Activated CD8-positive, alpha-beta T cell treated with anti-CD3 and anti-CD28 coated beads, Interleukin-2, amount 10 ng/mL, durations not matched to agents 7 days and 5 days (primary cell): ENCODE measurements at regions of chr5 and their contacts with region 1.

Region 1: DNA sequence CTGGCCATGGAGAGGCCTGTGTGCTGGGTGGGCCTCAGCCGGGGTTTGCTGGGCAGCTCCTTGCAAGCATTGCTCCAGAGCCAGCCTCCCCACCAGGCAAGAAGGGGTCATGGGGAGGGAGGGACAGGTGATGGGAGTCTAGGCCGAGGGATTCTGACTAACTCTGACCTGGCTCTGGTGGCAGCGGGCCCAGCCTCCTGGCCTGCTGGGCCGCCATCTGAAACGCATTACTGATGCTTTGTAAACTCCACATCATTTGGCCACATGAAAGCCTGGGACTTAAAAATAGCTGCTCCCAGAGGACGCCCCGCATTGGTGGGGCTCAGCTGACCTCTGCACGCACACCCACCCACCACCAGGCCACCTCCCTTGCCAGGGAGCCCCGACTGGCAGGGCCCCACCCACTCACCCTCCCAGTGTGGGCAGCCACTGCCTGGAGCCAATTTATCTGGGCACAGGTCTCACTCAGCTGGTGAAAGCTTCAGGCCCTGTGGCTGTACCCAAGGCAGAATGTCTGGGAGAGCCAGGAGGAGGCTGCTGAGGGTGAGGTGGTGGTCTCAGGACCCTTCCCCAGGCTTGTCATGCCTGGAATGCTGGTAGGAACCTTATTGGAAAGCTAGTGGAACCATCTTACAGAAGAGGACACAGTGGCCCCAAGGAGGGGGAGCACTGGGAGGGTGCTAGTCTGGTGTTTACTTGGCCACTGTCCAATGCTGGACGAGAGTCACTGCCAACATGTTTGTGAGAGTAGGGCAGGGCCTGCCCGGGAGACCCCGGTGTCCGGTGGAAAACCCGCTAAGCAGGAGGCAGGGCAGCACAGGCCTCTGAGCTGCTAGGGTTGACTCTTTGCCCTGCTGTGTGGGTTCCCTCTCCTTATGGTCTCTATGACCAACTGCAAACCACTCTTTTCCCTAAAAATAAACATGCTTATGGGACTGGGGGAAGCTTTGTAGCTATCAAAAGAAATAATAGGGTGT is 10.8 kb downstream of the TCF7 start:
- DNase-seq: no peak
- ATAC-seq: no peak
- H3K4me3 Mint-ChIP-seq: peak overlapping the region; percentile 12
- H3K27ac Mint-ChIP-seq: peak overlapping the region; percentile 61
- H3K4me1 Mint-ChIP-seq: peaks cover 98% of the 10 kb centered on the region
- H3K27me3 Mint-ChIP-seq: no peaks in the 10 kb centered on the region

Region 2: GRCh38 chr5:133727636-133728035 is 397.7 kb before region 1 on chr5:
- CTCF ChIA-PET with region 1: no interaction called
- POLR2A ChIA-PET with region 1: no interaction called
- DNase-seq: no peak
- ATAC-seq: no peak
- H3K4me3 Mint-ChIP-seq: no peak overlapping the region
- H3K27ac Mint-ChIP-seq: no peak overlapping the region
- H3K4me1 Mint-ChIP-seq: no peaks in the 10 kb centered on the region
- H3K27me3 Mint-ChIP-seq: peaks cover 5% of the 10 kb centered on the region

Region 3: GRCh38 chr5:134113902-134114875 is 11.1 kb before region 1 on chr5 and contains the start of gene TCF7:
- CTCF ChIA-PET with region 1: interaction called, 5 read pairs
- POLR2A ChIA-PET with region 1: interaction called, 45 read pairs
- DNase-seq: peak; percentile 79
- ATAC-seq: peak; percentile 81
- H3K4me3 Mint-ChIP-seq: peak within 1 kb of the TSS; percentile 75
- H3K27ac Mint-ChIP-seq: peak within 1 kb of the TSS; percentile 68
- H3K4me1 Mint-ChIP-seq: peaks cover 76% of the 10 kb centered on the region
- H3K27me3 Mint-ChIP-seq: peaks cover 10% of the 10 kb centered on the region
- total RNA-seq, gene TCF7: 93.4 to 97.8 TPM